ENCODE measurements at regions of chr7 and their contacts with region 1.

Region 1: DNA sequence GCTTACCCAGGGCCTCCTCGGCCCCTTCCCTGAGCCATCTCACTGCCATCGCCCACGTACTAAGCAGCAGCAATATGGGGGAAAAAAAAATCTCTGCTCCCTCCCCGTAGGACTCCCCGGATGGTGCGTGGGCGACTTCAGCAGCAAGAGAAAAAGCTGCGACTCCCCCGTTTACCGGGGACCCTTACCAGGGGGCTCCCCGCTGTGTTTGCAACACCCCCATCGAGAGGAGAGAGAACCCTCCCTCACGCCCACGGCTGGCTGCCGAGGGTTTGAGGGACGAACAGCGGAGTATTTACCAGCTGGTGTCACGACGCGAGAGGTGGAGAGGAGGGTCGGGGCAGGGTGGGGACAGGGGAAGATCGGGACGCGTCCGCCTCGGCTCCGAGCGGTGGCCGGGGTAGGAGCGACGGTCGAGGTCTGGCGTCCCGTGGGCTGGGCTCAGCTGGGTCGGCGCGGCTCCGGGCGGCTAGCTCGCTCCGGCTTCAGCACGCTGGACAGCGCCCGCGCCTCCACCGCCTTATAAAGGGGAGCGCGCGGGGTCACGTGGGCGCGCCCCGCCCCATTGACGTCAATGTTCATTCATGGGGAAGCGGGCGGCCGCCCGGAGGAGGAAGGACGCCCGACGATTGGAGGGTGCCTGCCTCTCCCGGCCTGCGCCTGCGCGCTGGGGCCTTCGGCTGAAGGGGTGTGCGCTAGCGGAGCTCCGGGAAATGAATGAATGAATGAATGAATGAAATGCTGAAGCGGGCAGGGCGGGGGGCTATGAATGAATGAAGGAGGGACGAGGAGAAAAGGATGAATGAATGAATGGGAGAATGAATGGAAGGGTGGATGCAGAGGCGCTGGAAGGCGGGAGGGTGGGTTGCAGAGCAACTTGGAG is at the start of gene VGF:
- DNase-seq: peak; percentile 84 to 97 (median 90)
- ATAC-seq: peak; percentile 93
- H3K4me3 ChIP-seq: peak within 1 kb of the TSS; percentile 10
- H3K4me3 Mint-ChIP-seq: peak within 1 kb of the TSS; percentile 58 to 92 (median 77)
- H3K27ac ChIP-seq: no peak within 1 kb of the TSS
- H3K27ac Mint-ChIP-seq: peak within 1 kb of the TSS; percentile 4 to 87 (median 73)
- H3K4me1 ChIP-seq: peaks cover 34 to 40% of the 10 kb centered on the region in 2 donors
- H3K4me1 Mint-ChIP-seq: peaks cover 39 to 56% (median 46%) of the 10 kb centered on the region in 7 donors
- H3K27me3 ChIP-seq: peaks cover 20 to 46% of the 10 kb centered on the region in 2 donors
- H3K27me3 Mint-ChIP-seq: peaks cover 55 to 70% (median 62%) of the 10 kb centered on the region in 5 donors
- total RNA-seq, gene VGF: 0.19 TPM in 1 of 5 experiments, not detected in the others

Region 2: GRCh38 chr7:101126651-101127280 is 38.5 kb before region 1 on chr7 and contains the start of gene SERPINE1:
- CTCF ChIA-PET with region 1: no interaction called
- POLR2A ChIA-PET with region 1: no interaction called
- intact Hi-C with region 1: no loop called
- DNase-seq: peak in 8 of 9 donors; percentile 3 to 56 (median 22)
- ATAC-seq: peak; percentile 80
- H3K4me3 ChIP-seq: no peak within 1 kb of the TSS
- H3K4me3 Mint-ChIP-seq: peak within 1 kb of the TSS; percentile 32 to 85 (median 60)
- H3K27ac ChIP-seq: no peak within 1 kb of the TSS
- H3K27ac Mint-ChIP-seq: peak within 1 kb of the TSS in 2 of 9 donors; percentile 30 to 70
- H3K4me1 ChIP-seq: peaks cover 6 to 15% of the 10 kb centered on the region in 2 donors
- H3K4me1 Mint-ChIP-seq: peaks cover 23 to 53% (median 30%) of the 10 kb centered on the region in 7 donors
- H3K27me3 ChIP-seq: no peaks in the 10 kb centered on the region
- H3K27me3 Mint-ChIP-seq: peaks cover 54 to 64% (median 55%) of the 10 kb centered on the region in 5 donors
- total RNA-seq, gene SERPINE1: 0.08 to 0.56 (median 0.36) TPM in 3 of 5 experiments, not detected in the others

Region 3: GRCh38 chr7:101153969-101154692 is 11.2 kb before region 1 on chr7 and contains the start of gene AP1S1:
- CTCF ChIA-PET with region 1: interaction called, 4 read pairs
- POLR2A ChIA-PET with region 1: interaction called, 4 read pairs
- intact Hi-C with region 1: loop called (anchors 1 kb)
- DNase-seq: peak; percentile 82 to 94 (median 90)
- ATAC-seq: peak; percentile 95
- H3K4me3 ChIP-seq: peak within 1 kb of the TSS; percentile 62
- H3K4me3 Mint-ChIP-seq: peak within 1 kb of the TSS; percentile 70 to 91 (median 84)
- H3K27ac ChIP-seq: peak within 1 kb of the TSS; percentile 42
- H3K27ac Mint-ChIP-seq: peak within 1 kb of the TSS in 8 of 9 donors; percentile 29 to 95 (median 78)
- H3K4me1 ChIP-seq: peaks cover 10% of the 10 kb centered on the region in 2 donors
- H3K4me1 Mint-ChIP-seq: peaks cover 10 to 21% (median 13%) of the 10 kb centered on the region in 7 donors
- H3K27me3 ChIP-seq: no peaks in the 10 kb centered on the region
- H3K27me3 Mint-ChIP-seq: peaks cover 7 to 24% (median 8%) of the 10 kb centered on the region in 5 donors
- total RNA-seq, gene AP1S1: 6.2 to 39.4 (median 8.3) TPM